Astrocyte of the cerebellum (primary cell): ENCODE measurements at regions of chr3 and their contacts with region 1.

Region 1: DNA sequence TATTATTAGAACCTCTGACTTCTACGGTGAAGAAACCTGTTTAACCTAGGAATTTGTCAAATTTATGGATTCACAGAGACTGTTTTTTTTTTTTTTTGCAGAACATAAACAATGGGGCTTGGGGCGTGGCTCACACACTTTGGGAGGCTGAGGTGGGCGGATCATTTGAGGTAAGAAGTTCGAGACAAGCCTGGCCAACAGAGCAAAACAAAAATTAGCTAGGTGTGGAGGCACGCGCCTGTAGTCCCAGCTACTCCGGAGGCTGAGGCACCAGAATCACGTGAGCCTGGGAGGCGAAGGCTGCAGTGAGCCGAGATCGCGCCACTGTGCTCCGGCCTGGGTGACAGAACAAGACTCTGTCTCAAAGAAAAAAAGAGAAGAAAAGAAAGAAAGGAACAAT is 3.0 kb downstream of the ZBTB11 start:
- DNase-seq: no peak
- H3K4me3 ChIP-seq: no peak overlapping the region
- CTCF ChIP-seq: no peak

Region 2: GRCh38 chr3:101591071-101591470 is 82.9 kb before region 1 on chr3:
- in situ Hi-C with region 1: loop called (anchors 5 kb)
- DNase-seq: no peak
- H3K4me3 ChIP-seq: no peak overlapping the region
- CTCF ChIP-seq: no peak